Activated naive CD4-positive, alpha-beta T cell treated with anti-CD3 and anti-CD28 coated beads, Interleukin-2, amount 10 ng/mL, durations not matched to agents 7 days and 5 days (primary cell): ENCODE measurements at regions of chr3 and their contacts with region 1.

Region 1: GRCh38 chr3:17841190-17841828 is 98.9 kb upstream of the TBC1D5 start:
- DNase-seq: peak; percentile 78
- H3K4me3 Mint-ChIP-seq: no peak overlapping the region
- H3K27ac Mint-ChIP-seq: no peak overlapping the region
- H3K4me1 Mint-ChIP-seq: no peaks in the 10 kb centered on the region
- H3K27me3 Mint-ChIP-seq: no peaks in the 10 kb centered on the region

Region 2: DNA sequence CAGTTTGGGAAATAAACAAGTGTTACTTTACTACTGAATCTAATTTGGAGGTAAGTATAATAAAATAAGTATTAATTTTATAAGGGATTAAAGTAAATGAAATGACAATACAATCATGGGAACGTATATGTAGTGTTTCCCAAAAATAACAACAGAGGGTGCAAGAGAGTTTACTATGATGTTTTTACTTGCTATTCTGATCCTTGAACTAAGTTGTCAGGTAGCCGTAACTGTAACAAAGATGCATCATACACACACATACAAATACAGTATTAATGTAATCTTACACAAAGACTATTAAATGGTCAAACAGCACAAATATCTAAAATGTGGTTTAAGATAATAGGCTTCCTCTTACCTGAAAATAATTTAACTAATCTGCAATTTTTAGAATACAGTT is 410.3 kb before region 1 on chr3:
- CTCF ChIA-PET with region 1: interaction called, 33 read pairs
- DNase-seq: no peak
- H3K4me3 Mint-ChIP-seq: no peak overlapping the region
- H3K27ac Mint-ChIP-seq: no peak overlapping the region
- H3K4me1 Mint-ChIP-seq: no peaks in the 10 kb centered on the region
- H3K27me3 Mint-ChIP-seq: no peaks in the 10 kb centered on the region

Region 3: DNA sequence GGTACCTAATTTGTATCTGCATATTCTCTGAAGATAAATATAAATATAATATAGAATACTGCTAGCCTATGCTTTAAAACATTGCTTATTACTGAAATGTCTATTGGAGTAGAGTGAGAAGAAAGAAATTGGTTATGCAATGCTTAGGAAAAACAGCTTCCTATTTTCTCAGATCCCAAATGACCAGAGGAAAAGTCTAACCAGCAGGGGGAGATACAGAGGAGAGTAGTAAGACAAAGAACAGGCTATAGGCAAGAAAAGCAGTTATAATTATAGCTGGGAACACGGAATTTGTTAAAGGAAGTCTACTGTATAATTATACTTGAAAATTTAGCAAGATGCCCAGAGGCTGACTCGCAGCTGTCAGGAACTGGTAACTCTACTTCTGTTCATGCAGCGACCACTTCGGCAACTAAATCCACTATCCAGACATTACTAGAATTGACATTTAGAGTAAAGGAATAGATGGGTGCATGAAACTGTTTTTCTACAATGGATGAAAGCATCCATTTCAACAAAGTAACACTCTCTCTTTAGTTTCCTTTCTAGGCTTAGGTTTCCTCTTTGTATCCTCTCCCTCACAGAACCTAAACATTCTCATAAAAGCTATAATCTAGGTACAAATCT is 196.1 kb before region 1 on chr3:
- CTCF ChIA-PET with region 1: interaction called, 44 read pairs
- DNase-seq: no peak
- H3K4me3 Mint-ChIP-seq: no peak overlapping the region
- H3K27ac Mint-ChIP-seq: no peak overlapping the region
- H3K4me1 Mint-ChIP-seq: no peaks in the 10 kb centered on the region
- H3K27me3 Mint-ChIP-seq: no peaks in the 10 kb centered on the region